ENCODE measurements at regions of chr2 and their contacts with region 1.

Region 1: DNA sequence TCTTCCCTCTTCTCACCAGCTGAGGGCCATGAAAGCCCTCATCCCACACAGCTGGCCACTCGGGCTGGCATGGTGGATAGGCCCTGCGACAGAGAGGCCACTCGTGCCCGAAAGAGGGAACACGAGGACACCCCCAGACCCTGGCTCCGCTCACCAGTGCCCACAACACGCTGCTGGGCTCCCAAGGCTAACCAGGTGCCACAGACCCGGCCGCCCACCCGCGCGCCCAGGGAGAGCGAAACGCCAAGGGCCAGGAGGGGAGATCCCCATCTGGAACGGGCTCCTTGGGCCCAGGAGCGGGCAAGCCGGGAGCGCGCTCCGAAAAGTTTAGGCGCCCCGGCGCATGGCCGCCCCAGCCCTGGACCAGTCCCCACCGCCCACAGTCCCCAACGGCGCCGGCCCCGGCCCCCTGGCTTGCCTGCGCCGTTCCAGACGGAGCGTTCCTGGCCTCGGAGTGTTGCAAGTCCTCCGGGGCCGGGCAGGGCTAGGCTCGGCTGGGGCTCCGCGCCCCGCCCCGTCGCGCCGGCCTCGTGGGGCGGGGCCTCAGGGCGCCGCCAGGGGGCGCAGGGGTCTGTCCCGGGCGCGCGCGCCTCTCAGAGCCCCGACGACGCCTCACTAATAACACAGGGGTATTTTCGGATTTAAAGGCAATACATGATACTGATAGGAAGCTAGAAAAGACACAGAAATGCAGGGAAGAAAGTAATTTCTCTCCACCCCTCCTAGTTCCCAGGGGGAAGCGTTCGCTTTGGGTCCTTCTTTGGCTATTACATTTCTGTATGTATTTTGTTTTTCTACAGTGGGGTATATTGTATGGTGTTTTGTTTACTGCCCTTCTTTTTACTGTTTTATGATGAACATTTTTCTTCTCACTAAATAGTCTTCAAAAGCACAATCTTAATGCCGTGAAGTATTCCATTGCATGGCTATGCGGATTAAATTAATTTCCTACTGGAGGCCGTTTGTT is at the start of gene TMBIM1:
- DNase-seq: peak; percentile 61 to 82 (median 82)
- H3K4me3 ChIP-seq: peak within 1 kb of the TSS; percentile 62 to 93 (median 80)
- H3K27ac ChIP-seq: peak within 1 kb of the TSS; percentile 66 to 90
- H3K4me1 ChIP-seq: peaks cover 15 to 67% (median 59%) of the 10 kb centered on the region in 4 experiments
- H3K27me3 ChIP-seq: no peaks in the 10 kb centered on the region

Region 2: DNA sequence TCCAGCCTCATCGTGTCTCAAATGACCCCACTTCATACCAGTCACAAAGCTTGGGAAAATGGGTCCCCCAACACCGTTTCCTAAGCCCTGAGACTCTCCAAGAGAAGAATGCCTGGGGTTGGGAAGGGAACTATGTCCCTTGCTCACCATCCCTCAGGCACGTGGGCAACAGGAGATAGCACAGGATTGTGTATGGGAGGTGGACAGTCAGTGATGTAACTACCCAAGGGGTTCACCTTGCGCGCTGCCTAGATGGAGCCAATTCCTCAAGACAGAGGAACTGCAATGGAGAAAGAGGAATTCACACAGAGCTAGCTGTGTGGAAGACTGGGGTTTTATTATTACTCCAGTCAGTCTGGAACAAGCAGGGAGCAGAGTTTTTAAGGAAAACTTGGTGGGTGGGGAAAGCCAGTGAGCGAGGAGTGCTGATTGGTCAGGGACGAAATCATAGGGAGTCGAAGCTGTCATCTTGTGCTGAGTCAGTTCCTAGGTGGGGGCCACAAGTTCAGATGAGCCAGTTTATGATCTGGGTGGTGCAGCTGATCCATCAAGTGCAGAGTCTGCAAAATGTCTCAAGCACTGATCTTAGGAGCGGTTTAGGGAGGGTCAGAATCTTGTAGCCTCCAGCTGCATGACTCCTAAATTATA is 111.7 kb before region 1 on chr2:
- CTCF ChIA-PET with region 1: no interaction called
- POLR2A ChIA-PET with region 1: no interaction called
- DNase-seq: no peak
- H3K4me3 ChIP-seq: no peak overlapping the region
- H3K27ac ChIP-seq: no peak overlapping the region
- H3K4me1 ChIP-seq: no peaks in the 10 kb centered on the region
- H3K27me3 ChIP-seq: peaks cover 0 to 4% (median 0%) of the 10 kb centered on the region in 5 experiments

Region 3: GRCh38 chr2:218329027-218329825 is 36.9 kb after region 1 on chr2:
- CTCF ChIA-PET with region 1: interaction called, 340 read pairs
- POLR2A ChIA-PET with region 1: interaction called, 7 read pairs
- DNase-seq: peak in 2 of 3 donors; percentile 39 to 45
- H3K4me3 ChIP-seq: peak overlapping the region in 2 of 7 experiments; percentile 28 to 50
- H3K27ac ChIP-seq: peak overlapping the region; percentile 61 to 83
- H3K4me1 ChIP-seq: peaks cover 18 to 97% (median 93%) of the 10 kb centered on the region in 4 experiments
- H3K27me3 ChIP-seq: no peaks in the 10 kb centered on the region

Region 4: GRCh38 chr2:218387374-218388194 is 95.3 kb after region 1 on chr2:
- CTCF ChIA-PET with region 1: interaction called, 64 read pairs
- POLR2A ChIA-PET with region 1: interaction called, 4 read pairs
- DNase-seq: peak in 2 of 3 donors; percentile 86 to 89
- H3K4me3 ChIP-seq: peak overlapping the region in 6 of 7 experiments; percentile 20 to 66 (median 52)
- H3K27ac ChIP-seq: no peak overlapping the region
- H3K4me1 ChIP-seq: peaks cover 0 to 16% (median 11%) of the 10 kb centered on the region in 4 experiments
- H3K27me3 ChIP-seq: no peaks in the 10 kb centered on the region

Region 5: GRCh38 chr2:218406209-218406948 is 114.0 kb after region 1 on chr2:
- CTCF ChIA-PET with region 1: interaction called, 13 read pairs
- POLR2A ChIA-PET with region 1: interaction called, 4 read pairs
- DNase-seq: peak; percentile 93 to 97 (median 95)
- H3K4me3 ChIP-seq: peak overlapping the region; percentile 21 to 77 (median 59)
- H3K27ac ChIP-seq: peak overlapping the region; percentile 33 to 70
- H3K4me1 ChIP-seq: peaks cover 5 to 62% (median 55%) of the 10 kb centered on the region in 4 experiments
- H3K27me3 ChIP-seq: no peaks in the 10 kb centered on the region

Region 6: GRCh38 chr2:218448934-218449333 is 156.6 kb after region 1 on chr2:
- CTCF ChIA-PET with region 1: no interaction called
- POLR2A ChIA-PET with region 1: no interaction called
- DNase-seq: no peak
- H3K4me3 ChIP-seq: no peak overlapping the region
- H3K27ac ChIP-seq: no peak overlapping the region
- H3K4me1 ChIP-seq: no peaks in the 10 kb centered on the region
- H3K27me3 ChIP-seq: no peaks in the 10 kb centered on the region

Measured in common myeloid progenitor, CD34-positive (primary cell).